ENCODE measurements at regions of chr1 and their contacts with region 1.

Region 1: DNA sequence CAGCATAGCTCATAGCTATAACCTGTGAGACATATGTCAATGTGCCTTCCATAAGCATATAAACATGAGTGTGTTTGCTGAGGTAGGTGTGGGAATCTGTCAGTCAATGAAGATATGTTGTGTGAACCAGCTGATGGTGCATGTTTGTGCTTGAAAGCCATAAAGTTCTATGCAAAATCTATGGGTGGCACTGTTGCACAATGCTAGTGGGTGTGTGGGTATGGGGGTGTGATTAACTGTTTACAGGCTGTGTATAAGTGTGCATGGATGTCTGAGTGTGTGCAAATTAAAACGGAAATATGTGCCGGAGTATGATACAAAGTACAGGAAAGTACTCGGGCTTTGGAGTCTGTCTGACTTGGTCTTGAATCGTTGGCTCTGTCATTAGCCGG is 1.0 kb upstream of the ATP2B4 start:
- DNase-seq: peak; percentile 88
- H3K4me3 ChIP-seq: no peak overlapping the region
- H3K27ac ChIP-seq: peak overlapping the region; percentile 95
- H3K4me1 ChIP-seq: peaks cover 34% of the 10 kb centered on the region
- H3K27me3 ChIP-seq: no peaks in the 10 kb centered on the region
- CTCF ChIP-seq: peak in 1 of 2 donors; percentile 7

Region 2: GRCh38 chr1:203368624-203369451 is 256.8 kb before region 1 on chr1:
- CTCF ChIA-PET with region 1: no interaction called
- dilution Hi-C with region 1: no loop called
- in situ Hi-C with region 1: no loop called
- intact Hi-C with region 1: loop called (anchors 2 kb)
- DNase-seq: peak; percentile 81
- H3K4me3 ChIP-seq: no peak overlapping the region
- H3K27ac ChIP-seq: no peak overlapping the region
- H3K4me1 ChIP-seq: peaks cover 14% of the 10 kb centered on the region
- H3K27me3 ChIP-seq: no peaks in the 10 kb centered on the region
- CTCF ChIP-seq: peak; percentile 53 to 66

Region 3: GRCh38 chr1:203558064-203558760 is 67.4 kb before region 1 on chr1:
- CTCF ChIA-PET with region 1: no interaction called
- dilution Hi-C with region 1: no loop called
- in situ Hi-C with region 1: no loop called
- intact Hi-C with region 1: loop called (anchors 1 kb)
- DNase-seq: peak; percentile 97
- H3K4me3 ChIP-seq: no peak overlapping the region
- H3K27ac ChIP-seq: peak overlapping the region; percentile 50
- H3K4me1 ChIP-seq: peaks cover 40% of the 10 kb centered on the region
- H3K27me3 ChIP-seq: no peaks in the 10 kb centered on the region
- CTCF ChIP-seq: no peak

Region 4: DNA sequence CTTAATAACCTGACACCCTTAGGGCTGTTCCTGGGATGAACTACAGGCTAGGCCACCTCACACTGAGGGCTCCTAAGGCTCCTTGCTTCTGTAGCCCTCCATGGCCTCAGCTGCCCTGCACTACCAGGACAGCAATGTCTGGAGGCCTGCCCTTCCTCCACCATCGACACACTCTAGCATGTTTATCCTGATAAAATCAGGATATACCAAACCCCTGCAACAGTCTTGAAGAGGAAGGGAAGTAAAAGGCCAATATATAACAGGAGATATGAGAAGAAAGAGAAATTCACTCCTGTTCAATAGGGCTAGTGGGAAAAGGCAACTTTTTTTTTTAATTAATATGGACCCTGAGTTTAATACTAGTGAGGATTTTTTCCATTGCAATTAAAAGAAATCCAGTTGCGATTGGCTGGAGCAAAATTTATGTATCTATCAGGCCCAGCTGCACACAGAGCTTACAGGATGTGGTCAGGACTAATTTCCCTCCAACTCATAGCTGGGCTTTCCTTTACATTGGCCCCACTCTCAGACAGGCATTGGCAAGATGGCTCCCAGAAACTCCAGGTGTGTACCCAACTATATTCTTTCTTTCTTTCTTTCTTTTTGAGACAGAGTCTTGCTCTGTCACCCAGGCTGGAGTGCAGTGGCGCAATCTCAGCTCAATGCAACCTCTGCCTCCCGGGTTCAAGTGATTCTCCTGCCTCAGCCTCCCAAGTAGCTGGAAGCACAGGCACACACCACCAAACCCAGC is 12.5 kb before region 1 on chr1:
- CTCF ChIA-PET with region 1: no interaction called
- dilution Hi-C with region 1: no loop called
- in situ Hi-C with region 1: no loop called
- intact Hi-C with region 1: loop called (anchors 2 kb)
- DNase-seq: no peak
- H3K4me3 ChIP-seq: no peak overlapping the region
- H3K27ac ChIP-seq: no peak overlapping the region
- H3K4me1 ChIP-seq: no peaks in the 10 kb centered on the region
- H3K27me3 ChIP-seq: no peaks in the 10 kb centered on the region
- CTCF ChIP-seq: no peak

Region 5: DNA sequence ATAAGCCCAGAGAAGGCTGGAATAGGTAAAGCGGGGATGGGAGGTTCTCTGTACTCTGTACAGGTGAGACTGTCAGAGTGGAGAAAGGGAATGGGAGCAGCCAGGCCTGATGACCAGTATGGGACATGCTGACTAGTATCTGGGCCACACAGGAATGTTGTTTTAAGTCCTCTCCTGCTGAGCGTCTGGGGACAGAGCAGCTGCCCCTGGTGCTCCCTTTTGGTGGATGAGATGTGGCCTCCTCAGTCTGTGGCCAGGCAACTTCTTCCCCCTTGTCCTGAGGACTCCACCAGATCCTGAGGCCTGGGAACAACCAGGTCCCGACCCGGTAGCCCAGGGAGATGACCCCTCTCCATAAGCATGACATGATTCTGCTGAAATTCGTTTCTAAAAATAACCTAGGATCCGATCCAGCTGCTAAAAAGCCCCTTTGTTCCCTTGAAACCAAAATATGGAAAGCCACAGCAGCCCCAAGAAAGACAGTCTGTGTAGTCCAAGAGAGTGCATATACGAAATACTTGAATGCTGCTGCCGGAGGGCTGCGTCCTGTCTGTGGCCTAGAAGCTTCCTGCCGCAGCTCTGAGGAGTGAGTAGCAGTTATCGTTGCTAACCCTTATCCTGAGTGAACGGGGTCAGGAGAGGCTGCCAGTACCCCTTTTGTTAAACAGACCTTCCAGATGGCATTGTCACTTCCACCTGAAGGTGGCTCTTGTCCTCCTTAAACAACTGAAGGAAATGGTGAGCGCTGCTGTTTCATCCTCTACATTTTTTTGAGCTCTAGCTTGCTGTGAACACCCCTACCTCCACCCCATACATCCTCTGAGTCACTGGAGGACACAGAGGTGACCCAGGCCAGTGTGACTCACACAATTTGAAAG is 48.2 kb after region 1 on chr1:
- CTCF ChIA-PET with region 1: interaction called, 26 read pairs
- dilution Hi-C with region 1: no loop called
- in situ Hi-C with region 1: no loop called
- intact Hi-C with region 1: loop called (anchors 1 kb)
- DNase-seq: peak; percentile 96
- H3K4me3 ChIP-seq: no peak overlapping the region
- H3K27ac ChIP-seq: peak overlapping the region; percentile 86
- H3K4me1 ChIP-seq: peaks cover 37% of the 10 kb centered on the region
- H3K27me3 ChIP-seq: no peaks in the 10 kb centered on the region
- CTCF ChIP-seq: peak in 1 of 2 donors; percentile 49

Region 6: DNA sequence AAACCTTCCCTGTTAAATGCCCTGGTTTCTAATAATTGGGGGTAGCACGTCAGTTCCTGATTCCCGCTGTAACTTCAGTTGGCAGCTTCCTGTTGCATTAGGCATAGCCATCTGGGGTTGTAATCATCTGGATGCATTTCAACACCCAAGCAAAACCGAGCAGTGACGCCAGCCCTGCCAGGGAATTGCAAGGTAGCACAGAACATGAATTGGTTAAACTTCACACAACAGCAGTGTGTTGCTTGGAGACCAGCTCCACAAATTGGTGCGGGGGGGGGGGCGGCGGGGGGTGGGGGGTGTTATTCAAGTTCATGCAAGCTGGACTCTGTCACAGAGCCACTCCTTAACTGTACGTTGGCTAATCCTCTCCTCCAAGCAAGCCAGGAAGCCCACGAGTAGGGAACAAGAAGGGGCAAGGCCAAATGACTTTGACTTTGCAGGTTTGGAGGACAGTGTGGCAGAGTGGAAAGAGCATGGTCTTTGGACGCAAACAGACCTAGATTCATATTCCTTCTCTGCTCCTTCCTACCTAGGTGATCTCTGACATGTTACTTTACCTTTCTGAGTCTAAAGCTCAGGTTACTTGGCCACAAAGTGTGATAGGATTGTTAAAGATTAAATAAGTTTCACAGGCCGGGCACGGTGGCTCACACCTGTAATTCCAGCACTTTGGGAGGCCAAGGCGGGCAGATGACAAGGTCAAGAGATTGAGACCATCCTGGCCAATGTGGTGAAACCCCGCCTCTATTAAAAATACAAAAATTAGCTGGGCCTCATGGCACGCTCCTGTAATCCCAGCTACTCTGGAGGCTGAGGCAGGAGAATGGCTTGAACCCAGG is 144.1 kb after region 1 on chr1:
- CTCF ChIA-PET with region 1: no interaction called
- dilution Hi-C with region 1: no loop called
- in situ Hi-C with region 1: no loop called
- intact Hi-C with region 1: loop called (anchors 5 kb)
- DNase-seq: peak; percentile 94
- H3K4me3 ChIP-seq: no peak overlapping the region
- H3K27ac ChIP-seq: peak overlapping the region; percentile 79
- H3K4me1 ChIP-seq: peaks cover 16% of the 10 kb centered on the region
- H3K27me3 ChIP-seq: no peaks in the 10 kb centered on the region
- CTCF ChIP-seq: no peak

Measured in mammary epithelial cell (primary cell).